Right ventricle myocardium inferior (tissue), 1 donor: ENCODE measurements at regions of chr1 and their contacts with region 1.

Region 1: DNA sequence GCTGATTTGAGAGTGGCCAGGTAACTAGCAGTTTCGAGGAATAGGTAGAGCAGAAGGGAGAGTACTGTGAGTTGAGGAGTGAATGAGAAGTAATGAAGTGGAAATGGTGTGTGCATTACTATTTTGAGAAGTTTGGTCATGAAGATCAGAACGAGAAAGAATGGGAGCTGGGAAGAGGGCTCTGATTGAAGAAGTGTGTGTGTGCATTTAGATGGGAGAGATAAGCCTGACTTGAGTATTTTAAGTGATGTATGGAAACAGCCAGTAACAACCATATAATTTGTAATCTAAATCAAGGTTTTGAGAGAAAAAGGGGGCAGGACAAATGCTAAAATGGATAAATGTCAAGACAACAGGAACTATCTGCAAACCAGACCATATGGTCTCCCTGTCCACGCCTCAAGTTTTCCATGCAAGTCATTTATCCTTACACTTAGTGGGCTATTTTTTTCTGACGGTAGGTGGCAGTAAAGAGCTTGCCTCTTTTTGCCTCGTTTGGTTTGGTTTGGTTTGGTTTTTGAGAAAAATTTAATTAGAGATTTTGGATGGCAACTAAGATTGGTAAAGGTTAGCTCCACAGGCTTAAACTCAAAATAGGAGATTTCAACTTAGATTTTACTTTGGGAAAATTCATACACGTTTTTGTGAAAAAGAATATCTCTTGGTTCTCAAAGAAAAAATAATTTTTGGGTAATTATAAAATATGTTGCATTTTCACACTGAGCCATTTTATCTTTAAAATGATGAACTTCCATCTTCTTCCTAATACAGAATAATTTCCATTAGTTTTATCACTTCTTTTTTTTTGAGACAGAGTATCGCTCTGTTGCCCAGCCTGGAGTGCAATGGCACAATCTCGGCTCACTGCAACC is 9.5 kb upstream of the B3GALNT2 start:
- DNase-seq: no peak
- ATAC-seq: no peak

Region 2: DNA sequence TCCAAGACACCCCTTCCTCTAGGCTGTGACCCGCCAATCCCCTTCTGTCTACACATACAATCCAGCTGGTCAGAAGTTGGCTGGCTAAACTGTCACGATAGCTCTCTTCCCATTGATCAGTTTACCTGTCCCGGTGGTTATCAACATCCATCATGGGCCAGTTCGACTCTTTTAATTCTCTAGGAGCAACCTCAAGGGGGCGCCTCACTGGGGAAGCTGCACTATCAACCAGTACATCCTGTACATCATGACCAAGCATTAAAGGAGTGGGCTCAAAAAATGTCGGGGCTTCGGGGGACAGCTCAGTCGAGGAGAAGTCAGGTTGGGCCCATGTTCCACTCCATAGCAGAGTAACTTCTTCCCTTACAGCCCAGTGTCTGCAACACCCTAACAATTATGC is 43.8 kb after region 1 on chr1:
- intact Hi-C with region 1: no loop called
- DNase-seq: no peak
- ATAC-seq: no peak

Region 3: GRCh38 chr1:235783148-235783776 is 269.5 kb after region 1 on chr1:
- intact Hi-C with region 1: loop called (anchors 1 kb)
- DNase-seq: no peak
- ATAC-seq: no peak

Region 4: DNA sequence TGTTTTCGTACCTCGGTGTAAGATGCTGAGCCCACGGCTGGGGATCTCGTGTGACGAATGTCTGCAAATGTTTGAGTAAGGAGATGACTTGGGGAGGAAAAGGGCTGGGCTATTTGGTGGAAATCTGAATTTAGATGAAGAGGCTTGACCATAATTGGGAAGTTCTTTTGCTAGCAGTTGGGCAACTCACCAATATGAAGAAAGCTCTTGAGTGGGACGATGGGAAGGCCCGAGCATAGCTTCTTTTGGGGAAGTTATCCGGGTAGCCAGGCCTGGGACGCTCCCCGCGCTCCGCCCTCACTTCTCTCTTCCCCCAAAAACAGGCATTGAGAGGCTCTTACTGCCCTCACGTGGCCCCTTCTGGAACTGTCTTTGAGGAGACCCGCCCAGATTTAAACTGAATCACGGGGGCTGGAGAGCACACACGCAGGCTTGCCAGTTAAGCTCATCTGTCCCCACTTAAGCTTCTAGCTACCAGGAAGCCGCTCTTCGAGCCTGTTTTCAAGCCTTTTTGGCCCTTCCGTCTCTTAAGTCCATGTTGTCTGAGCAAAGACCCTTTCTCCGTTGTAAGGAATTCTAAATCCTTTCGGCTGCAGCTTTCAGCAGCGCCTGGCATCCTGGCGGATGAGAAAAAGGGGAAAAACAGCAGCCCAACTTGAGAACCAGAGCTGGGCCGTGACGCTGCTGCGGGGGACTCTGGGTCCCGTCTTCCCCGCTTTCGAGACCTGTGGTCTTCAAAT is 458.0 kb after region 1 on chr1:
- intact Hi-C with region 1: loop called (anchors 5 kb)
- DNase-seq: peak; percentile 94
- ATAC-seq: peak; percentile 93